Activated CD8-positive, alpha-beta T cell treated with anti-CD3 and anti-CD28 coated beads, Interleukin-2, amount 10 ng/mL, durations not matched to agents 7 days and 5 days (primary cell): ENCODE measurements at regions of chr6 and their contacts with region 1.

Region 1: GRCh38 chr6:108492131-108492766 is 68.5 kb upstream of the FOXO3 start:
- DNase-seq: no peak
- ATAC-seq: no peak
- H3K4me3 Mint-ChIP-seq: no peak overlapping the region
- H3K27ac Mint-ChIP-seq: no peak overlapping the region
- H3K4me1 Mint-ChIP-seq: no peaks in the 10 kb centered on the region
- H3K27me3 Mint-ChIP-seq: peaks cover 4% of the 10 kb centered on the region

Region 2: DNA sequence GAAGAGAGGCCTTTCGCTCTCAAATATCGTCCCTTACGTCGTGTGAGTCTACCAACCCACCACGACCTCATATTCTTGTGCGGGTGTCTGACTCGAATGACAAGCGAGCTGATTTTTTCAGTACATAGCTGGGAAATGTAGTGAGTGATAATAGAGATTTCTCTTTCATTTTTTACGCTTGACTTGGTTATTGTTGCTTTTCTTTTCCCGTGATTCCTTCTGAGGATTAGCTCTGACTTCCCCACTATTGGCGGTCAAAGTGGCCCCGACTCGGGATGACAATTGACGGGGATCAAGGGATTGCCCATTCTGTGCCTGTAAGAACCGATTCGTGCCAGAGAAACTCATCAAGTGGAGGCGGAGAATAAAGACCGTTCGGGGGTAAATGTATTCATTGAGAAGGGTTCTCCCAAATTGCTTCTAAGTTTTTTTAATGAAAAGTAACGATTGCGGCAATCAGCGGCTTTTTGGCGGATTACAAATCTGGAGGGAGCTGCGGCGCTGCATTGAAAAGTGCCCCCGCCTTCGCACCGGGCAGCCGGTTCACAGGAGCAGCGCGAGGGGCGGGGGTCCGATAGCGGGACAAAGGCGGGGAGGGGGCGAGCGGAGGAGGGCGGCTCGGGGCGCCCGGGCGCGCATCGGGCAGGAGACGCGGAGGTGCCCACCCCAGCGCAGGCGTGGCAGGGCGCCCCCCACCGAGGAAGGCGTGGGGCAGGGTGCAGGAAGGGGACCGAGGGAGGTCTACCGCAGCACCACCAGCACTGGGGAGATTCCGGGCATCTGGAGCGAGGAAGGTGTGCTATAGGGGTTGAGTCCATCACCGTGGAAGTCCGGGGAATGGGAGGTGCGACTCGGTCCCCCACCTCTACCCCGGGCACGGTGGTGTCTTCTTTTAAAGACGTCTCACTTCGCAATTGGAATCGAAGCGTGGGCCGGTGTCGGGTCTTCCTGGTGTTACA is 373.2 kb before region 1 on chr6:
- CTCF ChIA-PET with region 1: interaction called, 68 read pairs
- POLR2A ChIA-PET with region 1: no interaction called
- DNase-seq: peak; percentile 29
- ATAC-seq: no peak
- H3K4me3 Mint-ChIP-seq: peak overlapping the region; percentile 83
- H3K27ac Mint-ChIP-seq: peak overlapping the region; percentile 60
- H3K4me1 Mint-ChIP-seq: peaks cover 37% of the 10 kb centered on the region
- H3K27me3 Mint-ChIP-seq: peaks cover 86% of the 10 kb centered on the region

Region 3: DNA sequence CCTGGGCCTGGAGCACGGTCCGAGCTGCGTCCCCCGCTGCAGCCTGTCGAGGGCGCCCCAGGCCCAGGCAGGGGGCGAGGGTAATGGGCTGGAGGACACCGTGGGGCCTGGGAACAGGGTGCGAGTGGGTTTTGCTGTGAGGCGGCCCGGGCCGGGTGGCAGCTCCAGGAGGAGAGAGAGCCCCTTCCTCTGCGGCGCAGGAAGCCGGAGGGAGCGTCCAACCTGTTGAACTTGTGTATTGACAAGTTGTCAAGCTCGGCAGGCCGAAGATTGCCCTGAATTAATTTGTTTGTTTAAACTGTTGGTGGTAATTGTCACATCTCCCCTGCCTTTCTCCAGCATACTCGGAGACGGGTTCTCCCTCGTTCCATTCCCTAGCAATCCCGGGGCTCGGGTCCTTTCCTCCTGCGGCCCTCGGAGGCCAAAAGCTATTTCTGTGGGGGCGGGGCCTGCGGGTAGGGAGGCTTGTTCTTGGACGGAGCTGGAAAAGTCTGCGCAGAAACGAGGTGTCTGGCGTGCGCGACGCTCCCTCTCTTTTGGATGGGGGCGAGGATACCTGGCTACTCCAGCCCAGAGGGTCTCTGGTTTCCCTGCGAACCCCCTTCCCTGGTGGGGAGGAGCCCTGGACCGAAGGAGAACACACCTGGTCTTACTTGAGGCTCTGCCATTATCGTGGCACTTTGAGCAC is 316.5 kb before region 1 on chr6:
- CTCF ChIA-PET with region 1: interaction called, 15 read pairs
- POLR2A ChIA-PET with region 1: no interaction called
- DNase-seq: no peak
- ATAC-seq: no peak
- H3K4me3 Mint-ChIP-seq: peak overlapping the region; percentile 45
- H3K27ac Mint-ChIP-seq: no peak overlapping the region
- H3K4me1 Mint-ChIP-seq: peaks cover 19% of the 10 kb centered on the region
- H3K27me3 Mint-ChIP-seq: peaks cover 88% of the 10 kb centered on the region

Region 4: DNA sequence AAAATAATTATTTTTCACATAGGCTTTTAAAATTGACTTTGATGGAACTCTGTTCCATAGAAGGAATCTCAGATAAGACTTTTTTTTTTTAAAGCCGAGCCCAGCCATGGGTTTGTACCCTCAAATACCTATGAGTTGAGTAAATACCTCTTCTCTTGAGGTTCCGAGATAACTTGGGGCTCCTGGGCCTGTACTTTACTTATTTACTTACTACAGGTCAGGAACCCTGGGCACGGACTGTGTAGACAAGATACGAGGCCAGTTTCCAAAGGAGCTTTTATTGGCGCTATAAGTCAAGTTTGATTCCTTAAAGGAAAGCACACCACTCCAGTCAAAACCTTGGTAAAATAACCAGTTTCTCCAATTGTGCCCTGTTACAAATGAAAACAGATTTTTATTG is 189.9 kb before region 1 on chr6:
- CTCF ChIA-PET with region 1: interaction called, 11 read pairs
- POLR2A ChIA-PET with region 1: no interaction called
- DNase-seq: no peak
- ATAC-seq: no peak
- H3K4me3 Mint-ChIP-seq: no peak overlapping the region
- H3K27ac Mint-ChIP-seq: no peak overlapping the region
- H3K4me1 Mint-ChIP-seq: peaks cover 14% of the 10 kb centered on the region
- H3K27me3 Mint-ChIP-seq: peaks cover 3% of the 10 kb centered on the region

Region 5: GRCh38 chr6:108699290-108700041 is 207.2 kb after region 1 on chr6:
- CTCF ChIA-PET with region 1: no interaction called
- POLR2A ChIA-PET with region 1: no interaction called
- DNase-seq: no peak
- ATAC-seq: no peak
- H3K4me3 Mint-ChIP-seq: no peak overlapping the region
- H3K27ac Mint-ChIP-seq: no peak overlapping the region
- H3K4me1 Mint-ChIP-seq: peaks cover 2% of the 10 kb centered on the region
- H3K27me3 Mint-ChIP-seq: no peaks in the 10 kb centered on the region